ENCODE measurements at regions of chr21 and their contacts with region 1.

Region 1: DNA sequence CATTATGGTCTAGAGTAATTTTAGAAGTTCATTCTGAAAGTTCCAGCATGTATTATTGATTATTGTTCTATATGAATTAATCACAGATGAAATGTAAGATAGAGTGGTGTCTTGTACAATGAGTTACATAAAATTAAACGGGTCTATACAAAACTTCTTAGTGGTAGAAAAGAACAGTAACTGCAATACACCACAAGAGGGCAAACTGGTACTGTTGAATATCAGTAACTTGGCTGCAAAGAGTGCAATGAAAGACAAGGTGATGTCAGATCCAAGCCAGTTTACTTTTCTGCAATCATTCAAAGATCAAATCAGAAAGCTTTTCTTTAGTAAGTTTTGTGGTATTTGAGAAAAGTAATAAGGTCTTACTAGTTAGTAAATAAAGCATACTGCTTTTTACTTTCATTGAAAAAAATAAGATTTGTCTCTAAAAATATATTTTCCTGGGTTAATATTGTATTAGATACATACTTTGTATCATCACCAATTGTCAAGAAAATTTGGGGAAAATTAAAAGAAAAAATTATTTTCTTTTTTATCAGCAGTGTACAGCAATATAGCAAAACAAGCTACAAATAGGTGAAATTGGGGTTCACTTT is 66.4 kb upstream of the BTG3 start:
- DNase-seq: no peak
- ATAC-seq: peak; percentile 91

Region 2: DNA sequence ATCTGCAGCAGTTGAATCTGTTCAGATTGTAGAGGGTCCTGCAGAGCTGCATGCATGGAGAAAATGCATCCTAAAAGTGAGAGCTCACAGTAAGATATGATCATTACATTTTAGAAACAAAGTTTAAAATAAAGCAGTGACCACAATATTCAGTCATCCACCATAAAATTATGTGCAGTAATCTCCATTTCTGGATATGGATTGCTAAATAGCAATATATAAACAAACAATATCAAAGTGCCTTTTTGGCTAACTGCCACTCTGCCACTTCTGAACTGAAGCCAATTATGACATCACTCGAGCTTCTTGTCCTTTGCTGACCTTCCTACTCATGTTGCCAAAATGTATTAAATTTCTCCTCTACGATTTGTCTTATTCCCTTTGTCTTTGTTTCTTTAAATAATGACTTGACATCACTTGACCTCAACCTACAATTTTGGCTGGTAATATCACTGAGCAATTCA is 428.3 kb before region 1 on chr21:
- intact Hi-C with region 1: no loop called
- DNase-seq: no peak
- ATAC-seq: no peak

Region 3: DNA sequence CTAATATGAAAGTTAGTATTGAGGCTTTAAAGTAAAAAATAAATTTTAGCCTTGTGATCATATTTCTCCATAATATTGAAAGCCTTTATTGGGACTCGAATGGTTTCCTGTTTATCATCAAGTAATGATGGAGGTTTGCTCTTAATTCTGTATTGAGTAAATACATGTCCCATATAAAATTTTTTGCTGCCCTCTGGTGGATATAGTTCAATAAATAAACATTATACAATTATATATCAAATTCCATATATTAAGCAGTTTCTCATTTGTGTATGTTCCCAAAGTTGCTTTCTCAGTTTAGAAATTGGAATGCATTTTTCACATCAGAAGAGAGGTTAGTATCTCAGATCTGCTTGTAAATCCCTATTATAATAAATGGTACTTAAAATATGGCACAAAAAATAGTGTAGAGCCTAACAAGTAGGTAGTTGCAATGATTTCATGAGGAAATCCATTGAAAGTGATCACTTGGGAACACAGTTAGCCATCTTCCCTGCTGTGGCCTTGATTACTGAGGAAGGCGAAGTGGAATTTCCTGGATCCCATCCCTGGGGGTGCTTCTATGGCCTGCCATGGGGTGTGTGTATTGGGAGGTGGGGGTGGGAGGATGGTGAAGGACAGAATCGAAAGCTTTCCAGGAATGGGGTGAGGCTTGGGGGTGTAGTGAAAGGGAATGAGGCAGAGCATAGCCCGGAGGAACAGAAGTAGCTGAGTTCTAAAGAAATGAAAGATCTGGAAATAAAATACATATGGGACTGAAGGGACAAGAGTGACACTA is 224.1 kb after region 1 on chr21:
- intact Hi-C with region 1: loop called (anchors 5 to 10 kb)
- DNase-seq: no peak
- ATAC-seq: peak; percentile 28

Region 4: DNA sequence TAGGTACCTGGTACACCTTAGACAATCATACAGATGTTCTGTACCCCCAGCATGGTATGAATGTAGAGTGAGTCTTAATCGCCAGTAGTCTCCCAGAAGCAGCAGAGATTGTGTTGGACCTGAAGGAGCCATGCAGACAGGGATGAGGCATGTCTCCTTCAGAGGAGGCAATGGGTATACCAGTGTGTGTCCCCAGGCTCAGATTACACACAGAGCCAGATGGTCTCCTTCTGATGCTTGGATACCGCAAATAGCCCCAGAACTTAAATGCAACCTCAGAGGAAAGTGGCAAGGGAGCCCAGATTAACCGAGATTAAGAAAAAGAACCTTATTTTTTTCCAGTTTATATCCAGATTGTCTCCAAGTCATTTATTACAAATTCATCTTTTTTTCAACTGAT is 236.9 kb after region 1 on chr21:
- intact Hi-C with region 1: loop called in 1 of 2 experiments (anchors 5 kb)
- DNase-seq: no peak
- ATAC-seq: no peak

Measured in left colon (tissue), 2 donors.